Esophagus squamous epithelium (tissue), 5 donors: ENCODE measurements at regions of chr9 and their contacts with region 1.

Region 1: DNA sequence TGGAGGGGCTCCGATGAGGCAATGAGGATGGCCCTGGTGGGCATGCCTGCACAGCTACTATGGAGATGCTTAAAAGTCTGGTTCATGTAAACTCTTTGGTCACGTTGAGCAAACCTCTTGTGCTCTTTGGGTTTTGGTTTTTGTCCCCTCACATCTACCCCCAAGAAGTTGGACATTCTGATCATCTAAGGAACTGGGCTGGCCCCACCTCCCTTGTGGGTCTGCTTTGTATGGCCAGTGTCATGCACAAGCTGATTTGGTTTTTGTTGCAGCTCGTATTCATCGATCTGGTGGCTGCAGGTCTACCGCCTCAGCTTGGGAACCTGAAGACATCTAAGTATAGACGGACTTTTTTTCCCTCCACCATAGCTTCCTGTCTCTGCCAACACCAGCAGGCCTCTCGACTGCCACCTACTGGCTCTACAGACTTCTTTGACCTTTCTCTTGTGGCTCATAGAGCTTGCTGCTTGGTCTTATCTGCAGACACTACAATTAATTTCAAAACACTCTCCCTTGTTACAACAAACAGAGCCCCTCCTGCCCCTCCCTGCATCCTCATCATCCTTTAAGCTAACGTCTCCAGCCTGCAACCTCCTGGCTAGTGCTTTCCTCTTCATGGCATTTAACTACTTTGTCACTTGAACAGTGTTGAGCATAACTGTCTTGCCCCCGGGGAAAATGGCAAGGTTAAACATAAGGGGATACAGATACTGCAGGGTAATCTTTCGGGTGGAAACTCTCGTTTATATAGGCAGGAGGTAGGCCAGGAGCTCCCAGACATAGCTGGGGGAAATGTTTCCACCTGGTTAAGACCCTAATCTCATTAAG is 34.5 kb downstream of the TSTD2 start:
- DNase-seq: no peak
- H3K4me3 ChIP-seq: no peak overlapping the region
- H3K27ac ChIP-seq: no peak overlapping the region
- H3K4me1 ChIP-seq: peaks cover 4 to 26% (median 6%) of the 10 kb centered on the region in 3 donors
- H3K27me3 ChIP-seq: no peaks in the 10 kb centered on the region
- CTCF ChIP-seq: peak; percentile 54 to 83 (median 68)
- POLR2A ChIP-seq: no peak

Region 2: GRCh38 chr9:97406620-97407177 is 192.0 kb before region 1 on chr9:
- intact Hi-C with region 1: loop called (anchors 10 kb)
- DNase-seq: no peak
- H3K4me3 ChIP-seq: no peak overlapping the region
- H3K27ac ChIP-seq: no peak overlapping the region
- H3K4me1 ChIP-seq: peaks cover 0 to 11% (median 4%) of the 10 kb centered on the region in 3 donors
- H3K27me3 ChIP-seq: peaks cover 0 to 31% (median 0%) of the 10 kb centered on the region in 4 donors
- CTCF ChIP-seq: no peak
- POLR2A ChIP-seq: no peak

Region 3: GRCh38 chr9:97468658-97469448 is 129.8 kb before region 1 on chr9:
- intact Hi-C with region 1: loop called (anchors 5 kb)
- DNase-seq: no peak
- H3K4me3 ChIP-seq: no peak overlapping the region
- H3K27ac ChIP-seq: peak overlapping the region in 3 of 4 donors; percentile 48 to 65 (median 59)
- H3K4me1 ChIP-seq: peaks cover 0 to 14% (median 3%) of the 10 kb centered on the region in 3 donors
- H3K27me3 ChIP-seq: no peaks in the 10 kb centered on the region
- CTCF ChIP-seq: peak; percentile 33 to 77 (median 64)
- POLR2A ChIP-seq: no peak